HCT116 (cell line): ENCODE measurements at regions of chr15 and their contacts with region 1.

Region 1: GRCh38 chr15:37764733-37765191 is 169.7 kb upstream of the TMCO5A start:
- DNase-seq: peak; percentile 56
- ATAC-seq: peak; percentile 96
- H3K4me3 ChIP-seq: no peak overlapping the region
- H3K27ac ChIP-seq: no peak overlapping the region
- H3K4me1 ChIP-seq: peaks cover 0 to 4% of the 10 kb centered on the region in 2 experiments; a peak in 2 of 4 replicates
- H3K27me3 ChIP-seq: no peaks in the 10 kb centered on the region
- CTCF ChIP-seq: peak; percentile 26 to 85 (median 72); a peak in 4 of 6 replicates
- POLR2A ChIP-seq: no peak
- RAD21 ChIP-seq: peak; percentile 39; the same call in 1 of the 2 replicates

Region 2: GRCh38 chr15:37034835-37035748 is 729.7 kb before region 1 on chr15:
- CTCF ChIA-PET with region 1: no interaction called
- POLR2A ChIA-PET with region 1: no interaction called
- RAD21 ChIA-PET with region 1: no interaction called
- intact Hi-C with region 1: no loop called
- DNase-seq: no peak
- ATAC-seq: no peak
- H3K4me3 ChIP-seq: no peak overlapping the region
- H3K27ac ChIP-seq: no peak overlapping the region
- H3K4me1 ChIP-seq: peaks cover 0 to 8% of the 10 kb centered on the region in 2 experiments; a peak in 2 of 4 replicates
- H3K27me3 ChIP-seq: no peaks in the 10 kb centered on the region
- CTCF ChIP-seq: no peak
- POLR2A ChIP-seq: no peak
- RAD21 ChIP-seq: no peak

Region 3: GRCh38 chr15:37425541-37425940 is 339.2 kb before region 1 on chr15:
- CTCF ChIA-PET with region 1: no interaction called
- POLR2A ChIA-PET with region 1: no interaction called
- RAD21 ChIA-PET with region 1: no interaction called
- intact Hi-C with region 1: no loop called
- DNase-seq: no peak
- ATAC-seq: no peak
- H3K4me3 ChIP-seq: no peak overlapping the region
- H3K27ac ChIP-seq: no peak overlapping the region
- H3K4me1 ChIP-seq: no peaks in the 10 kb centered on the region
- H3K27me3 ChIP-seq: no peaks in the 10 kb centered on the region
- CTCF ChIP-seq: no peak
- POLR2A ChIP-seq: no peak
- RAD21 ChIP-seq: no peak

Region 4: DNA sequence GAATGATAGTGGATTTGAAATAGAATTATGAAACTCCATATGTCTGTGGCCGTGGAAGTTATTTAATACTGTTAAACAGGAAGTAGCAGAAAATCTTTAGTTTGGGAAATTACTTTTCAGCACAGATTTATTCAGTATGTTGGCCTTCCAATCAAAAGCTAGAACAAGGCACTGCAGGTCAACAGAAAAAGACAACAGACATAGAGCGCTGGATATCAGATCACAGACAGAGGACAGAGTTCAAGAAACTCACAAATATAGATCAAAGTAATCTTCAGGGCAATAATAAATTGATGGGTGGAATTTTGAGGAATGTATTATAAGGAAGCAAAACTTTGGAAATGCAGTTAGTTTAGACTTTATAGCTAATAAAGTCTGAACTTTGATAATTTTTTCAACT is 10.2 kb after region 1 on chr15:
- CTCF ChIA-PET with region 1: interaction called, 12 read pairs
- POLR2A ChIA-PET with region 1: no interaction called
- RAD21 ChIA-PET with region 1: no interaction called
- intact Hi-C with region 1: no loop called
- DNase-seq: no peak
- ATAC-seq: no peak
- H3K4me3 ChIP-seq: no peak overlapping the region
- H3K27ac ChIP-seq: no peak overlapping the region
- H3K4me1 ChIP-seq: peaks cover 0 to 5% of the 10 kb centered on the region in 2 experiments; a peak in 1 of 4 replicates
- H3K27me3 ChIP-seq: no peaks in the 10 kb centered on the region
- CTCF ChIP-seq: no peak
- POLR2A ChIP-seq: no peak
- RAD21 ChIP-seq: no peak

Region 5: DNA sequence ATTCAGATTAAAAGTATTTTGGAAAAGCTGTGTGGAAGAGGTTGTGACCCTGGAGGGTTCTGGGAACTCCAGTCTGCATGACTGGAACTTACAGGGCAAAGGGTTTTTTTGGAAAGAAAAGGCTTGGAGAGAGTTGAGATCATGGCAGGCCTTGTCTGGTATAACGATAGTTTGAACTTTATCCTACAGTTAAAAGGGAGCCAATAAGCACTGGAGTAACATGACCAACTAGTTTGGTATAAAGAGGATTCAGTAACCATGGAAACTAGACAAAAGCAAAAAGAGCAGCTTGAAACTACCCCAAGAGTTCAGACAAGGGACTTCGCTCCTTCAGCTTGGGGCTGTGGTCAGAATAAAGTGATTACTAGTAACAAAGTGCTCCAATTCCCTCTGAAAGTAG is 18.5 kb after region 1 on chr15:
- CTCF ChIA-PET with region 1: interaction called, 10 read pairs
- POLR2A ChIA-PET with region 1: no interaction called
- RAD21 ChIA-PET with region 1: no interaction called
- intact Hi-C with region 1: no loop called
- DNase-seq: no peak
- ATAC-seq: no peak
- H3K4me3 ChIP-seq: no peak overlapping the region
- H3K27ac ChIP-seq: no peak overlapping the region
- H3K4me1 ChIP-seq: no peaks in the 10 kb centered on the region; a peak in 1 of 4 replicates
- H3K27me3 ChIP-seq: no peaks in the 10 kb centered on the region
- CTCF ChIP-seq: no peak
- POLR2A ChIP-seq: no peak
- RAD21 ChIP-seq: no peak

Region 6: GRCh38 chr15:37891766-37892368 is 127.1 kb after region 1 on chr15:
- CTCF ChIA-PET with region 1: interaction called, 11 read pairs
- POLR2A ChIA-PET with region 1: no interaction called
- RAD21 ChIA-PET with region 1: no interaction called
- intact Hi-C with region 1: no loop called
- DNase-seq: peak; percentile 38
- ATAC-seq: peak; percentile 93
- H3K4me3 ChIP-seq: no peak overlapping the region
- H3K27ac ChIP-seq: no peak overlapping the region
- H3K4me1 ChIP-seq: no peaks in the 10 kb centered on the region
- H3K27me3 ChIP-seq: no peaks in the 10 kb centered on the region
- CTCF ChIP-seq: peak; percentile 26 to 86 (median 71); a peak in 5 of 6 replicates
- POLR2A ChIP-seq: no peak
- RAD21 ChIP-seq: peak; percentile 62

Region 7: DNA sequence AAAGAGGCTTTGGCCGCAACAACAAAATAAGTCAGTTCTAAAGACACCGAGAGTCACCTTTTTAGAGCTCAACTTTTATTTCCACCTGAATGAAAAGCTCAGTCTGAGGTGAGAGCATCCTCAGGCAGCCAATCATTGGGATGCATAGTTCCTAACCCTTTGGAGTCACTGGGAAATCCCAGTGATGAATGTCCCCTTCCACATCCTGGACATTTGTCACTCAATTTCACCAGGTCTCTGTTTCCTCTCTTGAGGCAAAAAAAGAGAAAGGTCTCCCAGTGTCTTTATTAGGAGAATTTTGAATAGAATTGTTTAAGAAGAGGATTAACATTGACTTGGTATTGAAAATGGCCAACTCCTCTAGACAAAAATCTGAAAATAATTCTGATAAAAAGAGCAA is 350.4 kb after region 1 on chr15:
- CTCF ChIA-PET with region 1: no interaction called
- POLR2A ChIA-PET with region 1: no interaction called
- RAD21 ChIA-PET with region 1: no interaction called
- intact Hi-C with region 1: no loop called
- DNase-seq: no peak
- ATAC-seq: no peak
- H3K4me3 ChIP-seq: no peak overlapping the region
- H3K27ac ChIP-seq: no peak overlapping the region
- H3K4me1 ChIP-seq: peaks cover 0 to 3% of the 10 kb centered on the region in 2 experiments; a peak in 1 of 4 replicates
- H3K27me3 ChIP-seq: no peaks in the 10 kb centered on the region
- CTCF ChIP-seq: no peak
- POLR2A ChIP-seq: no peak
- RAD21 ChIP-seq: no peak